Common myeloid progenitor, CD34-positive (primary cell): ENCODE measurements at regions of chr7 and their contacts with region 1.

Region 1: GRCh38 chr7:28389504-28390395 is 22.6 kb upstream of the CREB5 start:
- DNase-seq: peak; percentile 70 to 83 (median 76)
- H3K4me3 ChIP-seq: peak overlapping the region in 4 of 7 experiments; percentile 13 to 44 (median 15)
- H3K27ac ChIP-seq: no peak overlapping the region
- H3K4me1 ChIP-seq: peaks cover 0 to 3% (median under 1%) of the 10 kb centered on the region in 4 experiments
- H3K27me3 ChIP-seq: peaks cover 0 to 5% (median 3%) of the 10 kb centered on the region in 5 experiments

Region 2: GRCh38 chr7:28364082-28364481 is 25.7 kb before region 1 on chr7:
- CTCF ChIA-PET with region 1: interaction called, 13 read pairs
- POLR2A ChIA-PET with region 1: no interaction called
- DNase-seq: peak in 1 of 3 donors; percentile 6
- H3K4me3 ChIP-seq: no peak overlapping the region
- H3K27ac ChIP-seq: no peak overlapping the region
- H3K4me1 ChIP-seq: peaks cover 4 to 13% (median 11%) of the 10 kb centered on the region in 4 experiments
- H3K27me3 ChIP-seq: no peaks in the 10 kb centered on the region

Region 3: GRCh38 chr7:28440055-28440601 is 50.4 kb after region 1 on chr7:
- CTCF ChIA-PET with region 1: no interaction called
- POLR2A ChIA-PET with region 1: no interaction called
- DNase-seq: no peak
- H3K4me3 ChIP-seq: no peak overlapping the region
- H3K27ac ChIP-seq: no peak overlapping the region
- H3K4me1 ChIP-seq: no peaks in the 10 kb centered on the region
- H3K27me3 ChIP-seq: no peaks in the 10 kb centered on the region

Region 4: GRCh38 chr7:28626624-28627262 is 237.0 kb after region 1 on chr7:
- CTCF ChIA-PET with region 1: interaction called, 11 read pairs
- POLR2A ChIA-PET with region 1: no interaction called
- DNase-seq: peak; percentile 44 to 68 (median 62)
- H3K4me3 ChIP-seq: no peak overlapping the region
- H3K27ac ChIP-seq: no peak overlapping the region
- H3K4me1 ChIP-seq: no peaks in the 10 kb centered on the region
- H3K27me3 ChIP-seq: no peaks in the 10 kb centered on the region